ENCODE measurements at regions of chr6 and their contacts with region 1.

Region 1: GRCh38 chr6:31366693-31367470 is 9.9 kb upstream of the HLA-B start:
- DNase-seq: peak; percentile 88
- ATAC-seq: peak; percentile 100
- H3K4me3 Mint-ChIP-seq: peak overlapping the region; percentile 60
- H3K27ac Mint-ChIP-seq: no peak overlapping the region
- H3K4me1 Mint-ChIP-seq: peaks cover 10% of the 10 kb centered on the region
- H3K27me3 Mint-ChIP-seq: peaks cover 58% of the 10 kb centered on the region

Region 2: DNA sequence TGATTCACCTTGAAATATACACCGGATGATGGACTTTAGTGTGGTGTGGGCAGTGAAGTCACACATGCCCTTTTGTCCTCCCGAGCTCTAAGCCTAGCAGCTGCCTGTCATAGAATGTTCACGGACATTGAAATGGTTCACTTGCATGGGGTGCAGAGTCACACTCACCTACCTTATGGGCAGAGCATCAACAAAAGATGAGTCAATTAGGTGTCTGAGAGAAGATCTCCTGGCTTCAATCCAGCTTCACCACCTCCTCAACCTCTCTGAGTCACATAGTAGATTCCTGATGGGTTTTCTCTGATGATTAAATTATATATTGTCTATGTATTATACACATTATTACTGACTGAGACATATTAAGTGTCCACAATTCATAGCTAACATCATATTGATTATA is 925.7 kb before region 1 on chr6:
- CTCF ChIA-PET with region 1: no interaction called
- POLR2A ChIA-PET with region 1: no interaction called
- DNase-seq: no peak
- ATAC-seq: no peak
- H3K4me3 Mint-ChIP-seq: no peak overlapping the region
- H3K27ac Mint-ChIP-seq: no peak overlapping the region
- H3K4me1 Mint-ChIP-seq: no peaks in the 10 kb centered on the region
- H3K27me3 Mint-ChIP-seq: peaks cover 76% of the 10 kb centered on the region

Region 3: DNA sequence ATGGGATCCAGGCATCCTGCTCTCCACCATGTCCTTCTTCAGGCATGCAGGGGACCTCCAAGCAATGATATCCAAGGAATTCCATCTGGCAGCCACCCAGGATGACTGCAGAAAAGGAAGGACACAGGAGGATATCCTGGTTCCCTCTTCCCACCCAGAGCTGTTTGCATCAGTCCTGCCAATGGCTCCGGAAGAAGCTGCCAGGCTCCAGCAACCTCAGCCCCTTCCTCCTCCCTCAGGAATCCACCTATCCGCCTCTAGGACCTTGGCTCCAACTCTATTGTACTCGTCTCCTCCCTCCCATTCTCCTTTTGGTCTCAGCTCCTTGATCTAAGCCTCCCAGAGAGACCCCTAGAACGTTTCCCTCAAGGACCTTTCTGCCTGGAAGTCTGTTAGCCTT is 227.3 kb before region 1 on chr6:
- CTCF ChIA-PET with region 1: interaction called, 21 read pairs
- POLR2A ChIA-PET with region 1: no interaction called
- DNase-seq: no peak
- ATAC-seq: no peak
- H3K4me3 Mint-ChIP-seq: no peak overlapping the region
- H3K27ac Mint-ChIP-seq: no peak overlapping the region
- H3K4me1 Mint-ChIP-seq: peaks cover 6% of the 10 kb centered on the region
- H3K27me3 Mint-ChIP-seq: no peaks in the 10 kb centered on the region

Region 4: DNA sequence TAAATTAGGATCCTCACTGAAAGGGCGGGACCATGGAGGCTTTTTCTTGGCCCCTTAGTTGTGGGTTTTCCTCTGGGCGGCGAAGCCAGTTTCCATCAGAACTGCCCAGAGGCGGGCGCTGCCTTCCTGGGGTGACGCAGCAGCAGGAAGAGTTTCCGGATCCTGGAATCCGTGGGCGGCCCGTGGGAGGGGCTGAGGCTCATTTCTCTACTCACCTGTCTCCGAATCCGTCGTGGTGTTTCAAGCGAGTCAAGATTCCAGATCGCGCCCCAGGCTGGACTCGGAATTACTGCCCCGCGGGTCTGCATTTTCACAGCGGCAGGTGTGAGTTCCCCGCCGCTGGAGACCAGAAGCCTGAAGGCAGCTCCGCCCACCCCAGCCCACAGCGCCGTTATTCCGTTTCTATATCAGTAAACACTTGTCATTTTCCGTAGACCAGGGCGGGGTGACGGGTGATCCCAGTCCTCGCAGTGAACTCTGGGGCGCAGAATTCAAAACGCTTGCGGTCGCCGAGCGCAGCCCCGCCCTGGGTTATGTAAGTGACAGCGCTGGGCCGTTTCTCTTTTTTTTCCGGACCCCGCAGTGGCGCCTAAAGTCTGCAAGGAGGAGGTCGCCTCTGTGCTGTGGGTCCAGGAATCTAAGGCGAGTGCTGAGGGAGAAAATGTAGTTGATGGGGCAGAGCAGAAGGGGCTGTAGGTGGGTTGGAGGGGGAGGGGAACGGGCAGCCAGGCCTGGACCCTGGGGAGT is 169.2 kb before region 1 on chr6:
- CTCF ChIA-PET with region 1: interaction called, 78 read pairs
- POLR2A ChIA-PET with region 1: interaction called, 28 read pairs
- DNase-seq: peak; percentile 98
- ATAC-seq: peak; percentile 82
- H3K4me3 Mint-ChIP-seq: peak overlapping the region; percentile 97
- H3K27ac Mint-ChIP-seq: peak overlapping the region; percentile 100
- H3K4me1 Mint-ChIP-seq: peaks cover 52% of the 10 kb centered on the region
- H3K27me3 Mint-ChIP-seq: no peaks in the 10 kb centered on the region

Region 5: GRCh38 chr6:31271641-31272357 is 95.1 kb before region 1 on chr6 and contains the start of gene HLA-C:
- CTCF ChIA-PET with region 1: interaction called, 12 read pairs
- POLR2A ChIA-PET with region 1: interaction called, 11 read pairs
- DNase-seq: peak; percentile 94
- ATAC-seq: peak; percentile 86
- H3K4me3 Mint-ChIP-seq: peak within 1 kb of the TSS; percentile 96
- H3K27ac Mint-ChIP-seq: peak within 1 kb of the TSS; percentile 100
- H3K4me1 Mint-ChIP-seq: peaks cover 46% of the 10 kb centered on the region
- H3K27me3 Mint-ChIP-seq: peaks cover 11% of the 10 kb centered on the region
- total RNA-seq, gene HLA-C: 1,075 to 1,135 TPM

Region 6: DNA sequence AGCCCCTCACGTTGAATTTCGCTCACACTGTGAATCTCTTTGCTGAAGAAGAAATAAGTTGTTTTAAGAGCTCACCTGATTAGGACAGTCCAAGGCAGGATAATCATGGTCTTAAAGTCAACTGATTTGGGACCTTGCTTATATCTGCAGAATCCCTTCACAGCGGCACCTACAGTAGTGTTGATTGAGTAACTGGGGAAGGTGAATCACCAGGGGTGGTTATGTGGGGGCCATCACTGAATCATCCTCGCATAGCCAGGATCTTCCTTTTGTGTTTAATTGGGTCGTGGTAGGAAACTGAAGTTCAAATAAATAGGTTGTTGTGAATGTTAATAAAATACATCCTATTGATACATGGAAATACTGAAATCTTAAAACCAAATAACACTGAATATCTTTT is 16.3 kb after region 1 on chr6:
- CTCF ChIA-PET with region 1: interaction called, 13 read pairs
- POLR2A ChIA-PET with region 1: no interaction called
- DNase-seq: no peak
- ATAC-seq: no peak
- H3K4me3 Mint-ChIP-seq: no peak overlapping the region
- H3K27ac Mint-ChIP-seq: no peak overlapping the region
- H3K4me1 Mint-ChIP-seq: no peaks in the 10 kb centered on the region
- H3K27me3 Mint-ChIP-seq: peaks cover 24% of the 10 kb centered on the region

Region 7: DNA sequence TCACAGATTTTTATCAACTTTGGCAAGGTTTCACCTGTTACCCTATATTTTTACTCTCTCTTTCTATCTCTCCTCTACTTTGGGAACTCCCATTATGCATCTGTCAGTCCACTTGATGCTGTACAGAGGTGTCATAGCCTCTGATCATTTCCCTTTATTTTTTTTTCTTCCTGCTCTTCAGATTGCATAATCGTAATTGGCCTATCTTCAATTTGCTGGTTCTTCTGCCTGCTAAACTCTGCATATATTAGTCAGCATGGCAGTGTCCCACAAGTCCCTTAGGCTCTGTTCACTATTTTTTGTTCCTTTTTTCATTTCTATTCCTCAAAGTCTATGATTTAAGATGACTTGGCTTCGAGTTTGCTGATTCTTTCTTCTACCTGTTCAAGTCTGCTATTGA is 86.4 kb after region 1 on chr6:
- CTCF ChIA-PET with region 1: no interaction called
- POLR2A ChIA-PET with region 1: no interaction called
- DNase-seq: no peak
- ATAC-seq: no peak
- H3K4me3 Mint-ChIP-seq: no peak overlapping the region
- H3K27ac Mint-ChIP-seq: no peak overlapping the region
- H3K4me1 Mint-ChIP-seq: no peaks in the 10 kb centered on the region
- H3K27me3 Mint-ChIP-seq: peaks cover 41% of the 10 kb centered on the region

Measured in activated CD8-positive, alpha-beta T cell treated with anti-CD3 and anti-CD28 coated beads, Interleukin-2, amount 10 ng/mL, durations not matched to agents 7 days and 5 days (primary cell).